Activated naive CD4-positive, alpha-beta T cell treated with anti-CD3 and anti-CD28 coated beads for 36 hours (primary cell): ENCODE measurements at regions of chr6 and their contacts with region 1.

Region 1: DNA sequence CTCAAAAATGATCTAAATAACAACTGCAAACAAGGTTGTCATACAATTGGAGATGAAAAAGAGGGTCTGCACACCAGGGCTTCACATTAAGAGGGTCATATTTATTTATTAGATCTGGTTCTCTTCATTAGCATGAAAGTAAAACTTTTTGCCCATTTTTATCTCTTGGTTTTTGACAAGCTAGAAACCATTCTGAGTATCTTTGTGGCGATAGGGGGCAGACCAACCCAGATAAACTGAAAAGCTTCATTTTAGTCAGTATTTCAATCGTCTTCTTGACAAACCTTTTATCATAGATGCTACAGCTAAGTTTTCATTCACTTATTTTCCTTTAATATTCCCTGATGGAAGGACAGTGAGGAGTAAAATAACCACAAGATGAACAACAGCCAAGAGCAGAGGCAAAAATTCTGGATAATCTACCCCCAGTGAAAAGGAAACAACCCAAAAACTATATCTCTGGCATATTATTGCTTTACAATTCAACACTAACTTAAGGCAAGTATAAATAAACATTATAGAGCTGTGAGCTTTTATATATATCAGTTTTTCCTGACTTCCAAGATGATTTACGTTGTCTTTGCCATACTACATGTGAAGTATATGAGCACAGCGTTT is 45.2 kb downstream of the THEMIS start:
- DNase-seq: peak; percentile 79
- H3K4me3 Mint-ChIP-seq: peak overlapping the region; percentile 54
- H3K27ac Mint-ChIP-seq: peak overlapping the region; percentile 59
- H3K4me1 Mint-ChIP-seq: peaks cover 73% of the 10 kb centered on the region
- H3K27me3 Mint-ChIP-seq: no peaks in the 10 kb centered on the region

Region 2: DNA sequence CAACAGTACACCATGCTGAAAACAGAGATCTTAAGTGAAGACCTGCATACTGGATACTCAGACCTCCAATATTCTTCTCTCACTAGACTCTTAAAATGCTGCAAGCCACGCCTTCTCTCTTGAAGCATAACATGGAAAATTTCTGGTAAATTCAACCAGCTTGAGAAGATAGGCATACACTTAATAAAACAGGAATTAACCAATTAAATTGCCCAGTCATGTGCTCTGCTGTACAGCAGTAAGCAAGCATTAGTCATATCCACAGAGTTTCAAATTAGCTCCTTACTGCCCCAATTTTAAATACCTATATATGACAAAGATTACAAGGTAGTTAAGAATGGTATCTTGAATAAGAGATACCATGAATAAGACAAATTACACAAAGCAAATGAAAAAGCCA is 224.9 kb before region 1 on chr6:
- CTCF ChIA-PET with region 1: no interaction called
- intact Hi-C with region 1: no loop called
- DNase-seq: no peak
- H3K4me3 Mint-ChIP-seq: no peak overlapping the region
- H3K27ac Mint-ChIP-seq: no peak overlapping the region
- H3K4me1 Mint-ChIP-seq: no peaks in the 10 kb centered on the region
- H3K27me3 Mint-ChIP-seq: no peaks in the 10 kb centered on the region

Region 3: GRCh38 chr6:127737009-127737486 is 118.6 kb before region 1 on chr6:
- CTCF ChIA-PET with region 1: interaction called, 45 read pairs
- intact Hi-C with region 1: loop called (anchors 1 kb)
- DNase-seq: peak; percentile 56
- H3K4me3 Mint-ChIP-seq: no peak overlapping the region
- H3K27ac Mint-ChIP-seq: peak overlapping the region; percentile 63
- H3K4me1 Mint-ChIP-seq: peaks cover 52% of the 10 kb centered on the region
- H3K27me3 Mint-ChIP-seq: no peaks in the 10 kb centered on the region

Region 4: DNA sequence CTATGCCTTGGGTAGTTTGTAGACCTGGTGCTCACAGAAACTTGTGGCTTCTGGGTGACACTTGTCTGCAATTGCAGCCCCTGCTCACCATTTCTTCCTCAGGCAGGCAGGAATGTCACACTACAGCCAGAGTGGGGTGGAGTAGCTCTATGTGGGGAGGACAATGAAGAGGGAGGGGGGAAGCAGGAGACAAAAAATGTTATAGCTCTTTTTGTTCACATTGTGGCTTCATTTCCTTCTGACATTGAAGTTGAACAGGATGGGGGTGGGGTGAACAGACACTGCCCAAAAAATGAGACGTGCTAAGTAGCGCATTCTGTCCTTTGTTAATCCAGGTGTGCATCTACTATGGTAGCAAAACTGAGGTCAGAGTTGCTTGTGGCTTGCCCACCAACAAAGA is 45.3 kb after region 1 on chr6 and contains the start of gene THEMIS:
- CTCF ChIA-PET with region 1: interaction called, 16 read pairs
- intact Hi-C with region 1: loop called (anchors 1 kb)
- DNase-seq: peak; percentile 52
- H3K4me3 Mint-ChIP-seq: peak within 1 kb of the TSS; percentile 81
- H3K27ac Mint-ChIP-seq: peak within 1 kb of the TSS; percentile 94
- H3K4me1 Mint-ChIP-seq: peaks cover 57% of the 10 kb centered on the region
- H3K27me3 Mint-ChIP-seq: no peaks in the 10 kb centered on the region
- total RNA-seq, gene THEMIS: 7.0 to 7.4 TPM

Region 5: DNA sequence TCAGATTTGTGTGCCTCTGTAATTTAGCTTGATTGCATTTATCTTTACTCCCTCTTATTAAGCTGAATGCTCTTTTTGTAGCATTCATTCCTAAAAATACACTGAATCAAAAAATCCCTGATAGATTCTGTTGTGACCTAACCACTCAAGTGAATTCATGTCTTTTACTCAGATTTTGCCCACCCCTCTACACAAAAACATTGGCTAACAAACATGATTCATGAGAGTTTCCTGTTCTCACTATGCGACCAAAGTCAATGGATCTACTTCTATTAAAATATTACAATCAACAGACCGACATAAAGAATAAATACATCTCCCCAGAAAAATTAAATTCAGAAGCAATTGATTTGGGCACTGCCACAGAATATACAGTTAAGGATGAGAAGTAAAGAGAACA is 144.7 kb after region 1 on chr6:
- CTCF ChIA-PET with region 1: interaction called, 10 read pairs
- intact Hi-C with region 1: no loop called
- DNase-seq: no peak
- H3K4me3 Mint-ChIP-seq: no peak overlapping the region
- H3K27ac Mint-ChIP-seq: no peak overlapping the region
- H3K4me1 Mint-ChIP-seq: peaks cover 33% of the 10 kb centered on the region
- H3K27me3 Mint-ChIP-seq: no peaks in the 10 kb centered on the region

Region 6: DNA sequence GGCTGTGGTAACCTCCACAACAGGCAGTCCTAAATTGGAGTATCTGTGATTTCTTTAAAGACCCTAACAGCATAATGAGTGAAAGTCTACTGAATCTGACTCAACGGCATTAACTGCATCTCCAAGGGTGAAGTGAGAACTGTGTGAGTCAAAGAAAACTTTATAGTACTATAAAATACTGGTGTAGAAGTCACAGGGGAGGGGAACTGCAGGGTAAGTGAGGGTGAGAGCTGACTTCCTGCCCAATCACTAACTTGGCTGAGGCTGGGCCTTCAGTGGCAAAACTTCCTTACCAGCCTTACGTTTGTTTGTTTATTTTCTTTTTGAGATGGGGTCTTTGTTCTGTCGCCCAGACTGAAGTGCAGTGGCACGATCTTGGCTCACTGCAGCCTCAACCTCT is 554.9 kb after region 1 on chr6:
- CTCF ChIA-PET with region 1: no interaction called
- intact Hi-C with region 1: loop called (anchors 2 kb)
- DNase-seq: no peak
- H3K4me3 Mint-ChIP-seq: no peak overlapping the region
- H3K27ac Mint-ChIP-seq: no peak overlapping the region
- H3K4me1 Mint-ChIP-seq: no peaks in the 10 kb centered on the region
- H3K27me3 Mint-ChIP-seq: no peaks in the 10 kb centered on the region

Region 7: DNA sequence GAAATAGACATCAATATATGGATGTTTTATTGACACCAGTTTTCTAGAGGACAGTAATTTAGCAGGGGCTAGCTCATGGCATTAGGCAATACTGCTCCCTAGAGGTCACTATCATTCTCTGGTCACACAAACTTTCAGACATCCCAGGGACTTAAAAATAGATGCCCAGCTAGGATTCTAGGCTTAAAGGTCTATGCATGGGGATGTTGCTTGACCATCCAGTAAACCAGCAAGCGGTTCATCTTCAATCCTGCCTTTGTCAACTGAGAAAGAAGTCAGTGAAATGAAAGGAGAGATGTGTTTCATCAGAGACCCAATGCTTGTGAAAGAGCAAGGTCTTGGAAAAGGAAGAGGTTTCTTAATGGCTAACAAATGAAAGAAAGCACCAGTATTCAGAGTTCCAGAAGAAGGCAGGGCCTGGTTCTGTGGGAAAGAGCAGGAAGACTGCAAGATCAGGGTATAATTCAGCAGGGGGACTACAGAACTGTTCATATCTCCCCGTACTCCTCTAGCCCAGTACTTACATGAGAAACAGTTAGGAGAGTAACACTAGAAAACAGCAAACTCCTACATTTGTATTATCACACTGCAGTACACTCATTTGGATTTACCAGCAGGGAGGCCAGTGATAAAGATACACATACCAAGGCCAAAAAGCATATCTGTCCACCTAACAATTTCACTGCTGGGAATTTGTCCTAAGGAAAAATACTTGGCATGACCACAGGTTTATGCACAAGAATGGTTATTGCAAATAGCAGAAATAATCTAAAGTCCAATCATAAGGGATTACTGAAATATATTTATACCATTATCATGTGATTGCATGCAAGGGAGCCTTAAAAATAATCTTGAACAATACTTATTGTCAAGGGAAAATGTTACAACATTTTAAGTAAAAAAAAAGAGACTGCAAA is 875.9 kb after region 1 on chr6:
- CTCF ChIA-PET with region 1: no interaction called
- intact Hi-C with region 1: loop called (anchors 1 kb)
- DNase-seq: peak; percentile 10
- H3K4me3 Mint-ChIP-seq: no peak overlapping the region
- H3K27ac Mint-ChIP-seq: no peak overlapping the region
- H3K4me1 Mint-ChIP-seq: no peaks in the 10 kb centered on the region
- H3K27me3 Mint-ChIP-seq: peaks cover 17% of the 10 kb centered on the region

Region 8: DNA sequence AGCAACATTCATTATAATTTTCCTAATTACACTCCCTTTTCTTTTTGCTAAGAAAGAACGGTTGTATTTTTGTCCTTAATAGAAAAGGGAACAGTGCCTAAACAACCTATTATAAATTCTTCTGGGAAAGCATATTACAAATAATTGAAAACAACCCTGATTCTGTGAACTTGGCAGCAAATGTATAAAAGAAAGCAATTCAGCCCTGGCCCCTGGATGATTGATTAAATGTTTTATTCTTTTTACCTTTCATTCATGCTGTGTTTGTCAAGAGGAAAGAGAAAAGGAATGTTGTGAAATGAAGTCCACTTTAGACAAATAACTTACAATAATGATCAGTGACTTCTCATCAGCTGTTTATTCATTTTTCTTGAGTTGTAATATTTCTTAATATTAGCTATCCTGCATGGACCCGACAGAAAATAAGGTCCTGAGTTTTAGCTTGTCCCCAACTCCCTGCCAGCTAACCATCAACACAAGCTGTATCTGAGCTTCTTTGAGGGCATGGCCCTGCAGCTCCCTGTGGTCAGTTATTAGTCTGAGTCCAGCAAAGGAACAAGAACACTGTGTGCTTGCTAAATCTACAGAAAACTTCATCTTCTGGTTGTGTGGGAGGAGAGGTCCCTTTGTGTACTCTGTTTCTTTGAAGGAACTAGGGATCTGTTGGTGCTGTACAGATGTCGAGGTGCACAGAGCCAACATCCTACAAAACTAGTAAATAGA is 1275.5 kb after region 1 on chr6:
- CTCF ChIA-PET with region 1: no interaction called
- intact Hi-C with region 1: no loop called
- DNase-seq: no peak
- H3K4me3 Mint-ChIP-seq: no peak overlapping the region
- H3K27ac Mint-ChIP-seq: no peak overlapping the region
- H3K4me1 Mint-ChIP-seq: no peaks in the 10 kb centered on the region
- H3K27me3 Mint-ChIP-seq: peaks cover 1% of the 10 kb centered on the region